CD8-positive, alpha-beta memory T cell (primary cell): ENCODE measurements at regions of chr12 and their contacts with region 1.

Region 1: DNA sequence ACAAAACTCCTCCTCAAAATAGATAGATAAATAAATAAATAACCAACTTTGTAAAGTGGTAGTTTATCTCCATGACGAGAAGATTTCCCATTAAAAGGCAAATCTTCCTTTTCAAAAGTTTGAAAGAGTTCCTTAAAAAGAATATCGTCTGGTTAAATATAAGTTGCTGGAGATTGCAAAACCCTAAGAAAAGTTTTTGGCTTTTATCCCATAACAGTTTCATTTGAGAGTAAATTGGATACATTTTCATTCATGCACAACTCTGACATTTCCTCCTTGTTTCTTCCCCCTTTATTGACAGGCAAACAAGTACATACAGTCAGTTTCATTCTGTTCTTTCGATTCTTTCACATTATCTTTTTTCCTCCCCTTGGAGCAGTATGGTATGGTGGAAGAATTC is 45.4 kb upstream of the BTG1 start:
- DNase-seq: no peak
- H3K4me3 ChIP-seq: no peak overlapping the region
- H3K4me3 Mint-ChIP-seq: no peak overlapping the region
- H3K27ac ChIP-seq: no peak overlapping the region
- H3K27ac Mint-ChIP-seq: no peak overlapping the region
- H3K4me1 ChIP-seq: peaks cover 11% of the 10 kb centered on the region
- H3K4me1 Mint-ChIP-seq: peaks cover 15 to 22% (median 18%) of the 10 kb centered on the region in 3 donors
- H3K27me3 ChIP-seq: no peaks in the 10 kb centered on the region
- H3K27me3 Mint-ChIP-seq: no peaks in the 10 kb centered on the region

Region 2: GRCh38 chr12:92393504-92393903 is 202.4 kb after region 1 on chr12:
- CTCF ChIA-PET with region 1: no interaction called
- POLR2A ChIA-PET with region 1: no interaction called
- DNase-seq: no peak
- H3K4me3 ChIP-seq: no peak overlapping the region
- H3K4me3 Mint-ChIP-seq: peak overlapping the region in 2 of 7 donors; percentile 28 to 66
- H3K27ac ChIP-seq: no peak overlapping the region
- H3K27ac Mint-ChIP-seq: no peak overlapping the region
- H3K4me1 ChIP-seq: peaks cover 64% of the 10 kb centered on the region
- H3K4me1 Mint-ChIP-seq: peaks cover 61 to 69% (median 65%) of the 10 kb centered on the region in 3 donors
- H3K27me3 ChIP-seq: no peaks in the 10 kb centered on the region
- H3K27me3 Mint-ChIP-seq: no peaks in the 10 kb centered on the region

Region 3: DNA sequence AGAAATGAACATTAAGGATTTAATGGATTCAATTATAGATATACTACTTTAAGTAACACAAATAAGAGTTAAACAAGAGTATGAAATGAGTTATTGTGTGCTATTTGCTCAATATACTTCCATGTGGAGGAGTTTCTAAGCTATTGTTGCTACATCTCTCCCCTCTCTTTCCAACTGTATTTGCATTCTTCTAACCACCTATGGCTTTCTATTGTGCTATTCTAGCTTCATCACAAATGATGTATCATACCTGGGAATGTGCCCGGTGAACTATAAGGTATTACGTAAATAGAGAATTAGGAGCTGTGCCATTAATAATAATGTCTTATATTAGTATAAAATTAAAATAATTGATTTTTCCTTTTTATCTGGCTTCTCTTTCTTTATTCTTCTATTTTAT is 424.6 kb after region 1 on chr12:
- CTCF ChIA-PET with region 1: no interaction called
- POLR2A ChIA-PET with region 1: interaction called, 13 read pairs
- DNase-seq: no peak
- H3K4me3 ChIP-seq: no peak overlapping the region
- H3K4me3 Mint-ChIP-seq: no peak overlapping the region
- H3K27ac ChIP-seq: no peak overlapping the region
- H3K27ac Mint-ChIP-seq: no peak overlapping the region
- H3K4me1 ChIP-seq: no peaks in the 10 kb centered on the region
- H3K4me1 Mint-ChIP-seq: no peaks in the 10 kb centered on the region
- H3K27me3 ChIP-seq: no peaks in the 10 kb centered on the region
- H3K27me3 Mint-ChIP-seq: no peaks in the 10 kb centered on the region